Right lobe of liver (tissue), 6 donors: ENCODE measurements at regions of chr3 and their contacts with region 1.

Region 1: DNA sequence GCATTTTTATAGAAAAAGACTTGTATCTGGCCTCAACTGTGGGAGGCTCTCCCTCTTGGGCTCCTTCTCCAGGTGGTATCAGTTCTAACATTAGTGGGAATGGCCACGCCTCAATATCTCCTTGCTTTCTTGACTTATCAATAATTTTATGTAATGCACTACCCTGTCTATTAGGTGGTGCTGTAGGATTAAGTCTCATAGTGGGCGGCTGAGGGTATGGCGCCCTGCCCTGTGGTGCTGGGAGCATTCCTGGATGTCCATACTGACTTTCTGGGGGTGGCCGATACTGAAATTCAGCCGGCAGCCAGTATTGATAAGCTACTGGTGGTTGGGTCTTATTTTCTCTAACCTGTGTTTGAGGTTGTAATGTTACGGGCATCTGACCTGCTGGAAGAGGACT is 8.7 kb upstream of the RPUSD3 start:
- DNase-seq: no peak
- ATAC-seq: no peak
- H3K4me3 ChIP-seq: no peak overlapping the region
- H3K27ac ChIP-seq: no peak overlapping the region
- H3K4me1 ChIP-seq: peaks cover 0 to 26% (median 4%) of the 10 kb centered on the region in 4 donors
- H3K27me3 ChIP-seq: no peaks in the 10 kb centered on the region
- CTCF ChIP-seq: no peak
- POLR2A ChIP-seq: no peak

Region 2: GRCh38 chr3:9932843-9933560 is 80.5 kb after region 1 on chr3:
- intact Hi-C with region 1: loop called in 1 of 2 experiments (anchors 10 kb)
- DNase-seq: peak; percentile 81 to 87 (median 86)
- ATAC-seq: peak; percentile 71 to 77 (median 76)
- H3K4me3 ChIP-seq: peak overlapping the region; percentile 71 to 86 (median 80)
- H3K27ac ChIP-seq: peak overlapping the region; percentile 61 to 88 (median 80)
- H3K4me1 ChIP-seq: peaks cover 0 to 30% (median 7%) of the 10 kb centered on the region in 4 donors
- H3K27me3 ChIP-seq: no peaks in the 10 kb centered on the region
- CTCF ChIP-seq: peak; percentile 60 to 77 (median 74)
- POLR2A ChIP-seq: no peak